Psoas muscle (tissue), 8 donors: ENCODE measurements at regions of chr10 and their contacts with region 1.

Region 1: DNA sequence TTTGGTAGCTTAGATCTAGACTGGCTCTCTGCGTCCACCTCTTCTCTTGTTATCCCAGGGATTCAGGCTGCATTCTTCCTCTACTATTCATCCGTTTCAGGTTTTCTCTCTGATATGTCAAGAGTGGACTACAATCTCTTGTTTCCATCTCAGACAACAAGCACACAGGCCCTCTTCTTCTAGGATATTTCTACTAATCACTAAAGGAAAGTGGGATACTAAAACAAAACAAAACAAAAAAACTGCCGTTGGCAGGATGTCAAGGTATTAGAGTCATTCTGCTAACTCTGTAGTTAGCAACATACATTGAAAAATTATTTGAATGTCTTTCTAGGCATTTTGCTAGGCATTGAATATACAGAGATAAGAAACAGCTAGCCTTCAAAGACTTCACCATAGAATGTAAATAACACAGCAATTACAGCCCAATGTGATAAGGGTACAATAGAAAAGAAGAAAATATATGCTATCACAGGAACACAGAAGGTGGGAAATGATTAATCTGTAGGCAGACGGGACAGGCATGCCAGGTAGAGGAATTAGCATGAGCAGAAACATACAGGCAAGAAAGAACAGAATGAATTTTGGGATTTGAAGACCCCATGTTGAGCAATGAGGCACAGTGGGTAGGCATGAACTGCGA is 210.5 kb downstream of the CSTF2T start:
- DNase-seq: no peak
- ATAC-seq: no peak
- H3K4me3 ChIP-seq: no peak overlapping the region
- H3K27ac ChIP-seq: no peak overlapping the region
- H3K4me1 ChIP-seq: no peaks in the 10 kb centered on the region
- H3K27me3 ChIP-seq: no peaks in the 10 kb centered on the region
- CTCF ChIP-seq: no peak

Region 2: GRCh38 chr10:51530541-51530940 is 41.7 kb after region 1 on chr10:
- intact Hi-C with region 1: loop called in 1 of 2 experiments (anchors 5 kb)
- DNase-seq: no peak
- ATAC-seq: no peak
- H3K4me3 ChIP-seq: no peak overlapping the region
- H3K27ac ChIP-seq: no peak overlapping the region
- H3K4me1 ChIP-seq: peaks cover 8% of the 10 kb centered on the region
- H3K27me3 ChIP-seq: no peaks in the 10 kb centered on the region
- CTCF ChIP-seq: no peak

Region 3: GRCh38 chr10:51544933-51545332 is 56.0 kb after region 1 on chr10:
- intact Hi-C with region 1: no loop called
- DNase-seq: no peak
- ATAC-seq: no peak
- H3K4me3 ChIP-seq: no peak overlapping the region
- H3K27ac ChIP-seq: no peak overlapping the region
- H3K4me1 ChIP-seq: no peaks in the 10 kb centered on the region
- H3K27me3 ChIP-seq: no peaks in the 10 kb centered on the region
- CTCF ChIP-seq: no peak